WTC11 (cell line): ENCODE measurements at regions of chr2 and their contacts with region 1.

Region 1: DNA sequence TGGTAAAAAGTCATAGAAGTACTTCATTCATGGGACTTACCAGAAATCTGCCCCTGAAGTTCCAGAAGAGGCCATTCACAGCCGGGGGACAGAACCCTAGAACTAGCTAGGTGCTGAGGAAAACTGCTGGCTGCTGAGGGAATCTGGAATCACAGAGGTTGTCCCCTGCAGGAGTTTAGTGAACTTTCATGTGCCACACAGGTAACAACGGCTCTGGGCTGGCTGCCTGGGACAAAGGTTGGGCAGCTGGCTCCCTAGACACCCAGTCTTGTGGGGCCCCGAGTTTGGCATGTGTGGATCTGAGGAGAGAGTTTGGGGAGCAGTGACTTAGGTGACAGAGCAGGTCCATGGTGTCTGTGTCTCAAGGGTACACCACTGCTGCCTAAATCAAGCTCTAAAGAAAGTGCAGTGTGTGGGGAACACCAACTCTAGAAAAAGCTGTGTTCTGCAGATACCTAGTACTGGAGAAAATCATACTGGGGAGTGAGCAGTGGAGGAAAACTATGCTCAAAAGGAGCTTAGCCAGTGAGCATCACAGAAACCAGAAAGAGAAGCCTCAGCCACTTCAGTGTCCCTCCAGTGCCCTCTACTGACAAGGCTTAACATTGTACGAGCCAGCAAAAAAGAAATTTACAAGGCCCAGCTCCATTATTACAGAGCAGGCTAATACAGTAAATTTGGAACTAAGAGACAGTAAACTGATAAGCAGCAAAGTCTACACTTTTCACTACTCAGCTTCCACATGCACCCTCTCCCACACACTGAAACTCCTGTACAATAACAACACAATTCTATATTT is 15.2 kb downstream of the GALNT3 start:
- DNase-seq: peak; percentile 17
- ATAC-seq: peak; percentile 86
- H3K4me3 Mint-ChIP-seq: no peak overlapping the region
- H3K27ac Mint-ChIP-seq: peak overlapping the region; percentile 32
- H3K4me1 Mint-ChIP-seq: peaks cover 39% of the 10 kb centered on the region
- H3K27me3 Mint-ChIP-seq: no peaks in the 10 kb centered on the region
- CTCF ChIP-seq: peak; percentile 45; the same call in 1 of the 2 replicates

Region 2: DNA sequence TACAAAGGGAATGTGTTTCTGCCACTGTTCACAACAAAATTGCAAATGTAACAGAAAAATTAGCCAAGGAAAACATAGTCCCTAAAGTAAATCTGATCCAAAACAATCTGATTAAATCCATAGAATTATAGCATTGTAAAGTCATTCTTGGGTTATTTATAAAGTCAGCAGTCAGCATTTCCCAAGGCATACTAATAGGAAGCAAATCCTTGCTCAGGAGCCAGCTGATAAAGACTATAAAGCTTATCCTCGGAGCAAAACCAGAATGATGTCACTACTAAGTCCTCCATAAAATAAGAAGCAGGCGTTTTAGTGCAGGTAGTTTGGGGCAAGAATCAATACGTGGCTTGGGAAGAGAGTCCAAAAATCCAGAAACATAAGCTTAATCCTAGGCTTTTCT is 376.7 kb before region 1 on chr2:
- CTCF ChIA-PET with region 1: interaction called, 13 read pairs
- POLR2A ChIA-PET with region 1: no interaction called
- DNase-seq: no peak
- ATAC-seq: no peak
- H3K4me3 Mint-ChIP-seq: no peak overlapping the region
- H3K27ac Mint-ChIP-seq: no peak overlapping the region
- H3K4me1 Mint-ChIP-seq: peaks cover 32% of the 10 kb centered on the region
- H3K27me3 Mint-ChIP-seq: no peaks in the 10 kb centered on the region; the same call in 1 of the 2 replicates
- CTCF ChIP-seq: no peak

Region 3: GRCh38 chr2:165633431-165633830 is 145.4 kb before region 1 on chr2:
- CTCF ChIA-PET with region 1: interaction called, 11 read pairs
- POLR2A ChIA-PET with region 1: no interaction called
- DNase-seq: no peak
- ATAC-seq: peak; percentile 36
- H3K4me3 Mint-ChIP-seq: no peak overlapping the region
- H3K27ac Mint-ChIP-seq: peak overlapping the region; percentile 91
- H3K4me1 Mint-ChIP-seq: peaks cover 52% of the 10 kb centered on the region
- H3K27me3 Mint-ChIP-seq: no peaks in the 10 kb centered on the region
- CTCF ChIP-seq: no peak

Region 4: DNA sequence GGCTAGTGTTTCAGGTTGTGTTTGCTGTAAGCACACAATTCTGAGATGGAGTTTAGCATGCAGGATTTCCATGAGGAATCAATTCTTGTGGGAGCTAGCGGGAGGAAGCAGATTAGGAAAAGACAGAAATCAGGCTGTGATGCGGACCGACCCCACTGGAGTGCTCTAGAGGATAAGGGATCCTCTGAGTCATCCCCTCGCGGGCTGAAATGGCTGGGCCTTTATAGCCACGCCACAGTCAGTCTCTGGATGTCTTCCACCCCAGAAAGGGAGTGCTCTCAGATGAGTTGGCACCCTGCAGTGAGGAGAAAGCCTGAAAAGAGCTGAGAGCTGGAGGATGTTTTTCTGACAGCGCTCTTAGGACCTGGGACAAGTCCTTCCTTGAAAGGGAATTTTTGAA is 87.2 kb before region 1 on chr2:
- CTCF ChIA-PET with region 1: interaction called, 26 read pairs
- POLR2A ChIA-PET with region 1: no interaction called
- DNase-seq: peak; percentile 57
- ATAC-seq: peak; percentile 98
- H3K4me3 Mint-ChIP-seq: no peak overlapping the region
- H3K27ac Mint-ChIP-seq: no peak overlapping the region
- H3K4me1 Mint-ChIP-seq: peaks cover 21% of the 10 kb centered on the region
- H3K27me3 Mint-ChIP-seq: no peaks in the 10 kb centered on the region
- CTCF ChIP-seq: no peak

Region 5: DNA sequence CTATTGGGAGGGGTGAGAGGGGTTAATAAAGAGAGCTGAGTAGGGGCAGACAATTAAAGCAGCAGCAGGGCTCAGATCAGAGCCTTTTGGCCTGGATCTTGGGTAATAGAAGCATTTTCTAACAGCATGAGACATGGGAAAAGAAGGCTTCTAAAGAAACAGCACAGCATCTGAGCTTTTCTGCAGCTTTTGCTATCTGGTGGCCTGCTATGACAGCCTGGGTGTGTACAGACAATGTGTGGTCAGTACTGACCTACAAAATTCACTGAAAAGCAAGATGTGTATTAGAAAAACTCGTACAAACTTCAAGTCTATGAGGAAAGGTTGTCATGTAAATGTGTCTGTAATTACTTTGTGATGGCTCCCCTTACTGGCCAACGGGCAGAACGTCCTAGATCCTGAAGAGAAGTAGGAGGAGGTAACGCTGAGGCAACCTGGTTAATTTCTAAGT is 80.4 kb before region 1 on chr2:
- CTCF ChIA-PET with region 1: interaction called, 12 read pairs
- POLR2A ChIA-PET with region 1: no interaction called
- DNase-seq: peak; percentile 37
- ATAC-seq: peak; percentile 81
- H3K4me3 Mint-ChIP-seq: peak overlapping the region; percentile 18; the same call in 1 of the 2 replicates
- H3K27ac Mint-ChIP-seq: peak overlapping the region; percentile 92
- H3K4me1 Mint-ChIP-seq: peaks cover 62% of the 10 kb centered on the region
- H3K27me3 Mint-ChIP-seq: no peaks in the 10 kb centered on the region
- CTCF ChIP-seq: 0 out of 2 replicates have a peak, but pooled peaks have one; percentile 9

Region 6: DNA sequence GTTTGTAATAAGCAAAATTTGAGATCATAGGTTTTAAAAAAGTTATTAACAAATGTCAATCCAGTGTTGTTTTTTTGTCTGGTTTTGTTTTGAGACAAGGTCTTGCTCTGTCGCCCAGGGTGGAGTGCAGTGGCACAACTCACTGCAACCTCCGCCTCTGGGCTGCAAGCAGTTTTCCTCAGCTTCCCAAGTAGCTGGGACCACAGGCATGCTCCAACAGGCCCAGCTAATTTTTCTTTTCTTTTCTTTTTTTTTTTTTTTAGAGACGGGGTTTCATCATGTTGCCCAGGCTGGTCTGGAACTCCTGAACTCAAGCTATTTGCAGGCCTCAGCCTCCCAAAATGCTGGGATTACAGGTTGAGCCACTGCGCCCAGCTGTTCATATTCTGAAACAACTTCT is 16.1 kb before region 1 on chr2:
- CTCF ChIA-PET with region 1: interaction called, 21 read pairs
- POLR2A ChIA-PET with region 1: no interaction called
- DNase-seq: no peak
- ATAC-seq: peak; percentile 64
- H3K4me3 Mint-ChIP-seq: no peak overlapping the region
- H3K27ac Mint-ChIP-seq: peak overlapping the region; percentile 86; the same call in 1 of the 2 replicates
- H3K4me1 Mint-ChIP-seq: peaks cover 49% of the 10 kb centered on the region
- H3K27me3 Mint-ChIP-seq: no peaks in the 10 kb centered on the region
- CTCF ChIP-seq: no peak

Region 7: DNA sequence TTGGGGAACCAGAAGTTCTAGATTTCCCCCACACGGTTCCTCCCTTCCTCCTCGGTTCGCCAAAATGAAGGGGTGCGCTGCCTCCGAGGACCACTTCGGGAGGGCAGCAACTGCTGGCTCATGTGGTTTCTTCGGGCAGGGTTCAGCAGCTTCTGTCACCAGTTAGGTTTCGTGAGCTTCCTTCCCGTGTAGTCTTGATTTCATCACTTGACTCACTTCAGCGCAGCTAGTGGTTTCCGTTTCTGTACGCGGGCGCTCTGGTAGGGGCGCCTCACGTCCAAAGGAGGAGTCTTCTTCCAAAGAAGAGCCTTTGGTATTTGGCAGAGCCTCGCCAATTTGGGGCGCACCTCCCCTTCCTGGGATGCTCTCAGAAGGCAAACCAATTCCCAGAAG is 15.7 kb after region 1 on chr2:
- CTCF ChIA-PET with region 1: interaction called, 18 read pairs
- POLR2A ChIA-PET with region 1: interaction called, 3 read pairs
- DNase-seq: peak; percentile 43
- ATAC-seq: peak; percentile 45
- H3K4me3 Mint-ChIP-seq: peak overlapping the region; percentile 99
- H3K27ac Mint-ChIP-seq: peak overlapping the region; percentile 90
- H3K4me1 Mint-ChIP-seq: peaks cover 63% of the 10 kb centered on the region
- H3K27me3 Mint-ChIP-seq: peaks cover 2% of the 10 kb centered on the region
- CTCF ChIP-seq: no peak

Region 8: GRCh38 chr2:165827016-165827920 is 48.4 kb after region 1 on chr2:
- CTCF ChIA-PET with region 1: no interaction called
- POLR2A ChIA-PET with region 1: no interaction called
- DNase-seq: no peak
- ATAC-seq: no peak
- H3K4me3 Mint-ChIP-seq: no peak overlapping the region
- H3K27ac Mint-ChIP-seq: no peak overlapping the region
- H3K4me1 Mint-ChIP-seq: no peaks in the 10 kb centered on the region
- H3K27me3 Mint-ChIP-seq: no peaks in the 10 kb centered on the region
- CTCF ChIP-seq: no peak

Region 9: DNA sequence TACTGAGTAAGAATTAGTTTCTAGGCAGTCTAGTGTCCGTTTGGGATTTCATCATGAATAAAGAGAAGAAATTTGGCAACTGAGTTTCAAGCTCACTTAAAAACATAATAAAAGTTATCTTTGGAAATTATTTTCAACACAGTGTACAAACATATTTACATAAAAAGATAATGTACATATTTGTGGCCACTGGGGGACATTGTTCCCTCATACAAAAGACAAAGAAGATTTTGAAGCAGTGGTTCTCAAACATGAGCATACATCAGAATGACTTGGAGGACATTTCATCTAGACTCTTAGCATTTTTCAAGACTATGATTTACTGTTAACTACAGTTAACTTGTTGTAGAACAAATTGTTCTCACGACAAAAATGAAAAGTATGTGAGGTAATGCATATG is 190.4 kb after region 1 on chr2:
- CTCF ChIA-PET with region 1: no interaction called
- POLR2A ChIA-PET with region 1: no interaction called
- DNase-seq: no peak
- ATAC-seq: no peak
- H3K4me3 Mint-ChIP-seq: no peak overlapping the region
- H3K27ac Mint-ChIP-seq: no peak overlapping the region
- H3K4me1 Mint-ChIP-seq: no peaks in the 10 kb centered on the region
- H3K27me3 Mint-ChIP-seq: no peaks in the 10 kb centered on the region
- CTCF ChIP-seq: no peak